Gastrocnemius medialis (tissue), 4 donors: ENCODE measurements at regions of chr20 and their contacts with region 1.

Region 1: GRCh38 chr20:53915446-53916172 is 154.8 kb downstream of the BCAS1 start:
- DNase-seq: peak; percentile 84 to 90
- ATAC-seq: peak; percentile 92 to 94
- H3K4me3 ChIP-seq: peak overlapping the region; percentile 67 to 73 (median 71)
- H3K27ac ChIP-seq: peak overlapping the region; percentile 63 to 88 (median 81)
- H3K4me1 ChIP-seq: peaks cover 4 to 28% of the 10 kb centered on the region in 2 donors
- H3K27me3 ChIP-seq: no peaks in the 10 kb centered on the region
- CTCF ChIP-seq: peak; percentile 80 to 95 (median 87)
- POLR2A ChIP-seq: no peak

Region 2: DNA sequence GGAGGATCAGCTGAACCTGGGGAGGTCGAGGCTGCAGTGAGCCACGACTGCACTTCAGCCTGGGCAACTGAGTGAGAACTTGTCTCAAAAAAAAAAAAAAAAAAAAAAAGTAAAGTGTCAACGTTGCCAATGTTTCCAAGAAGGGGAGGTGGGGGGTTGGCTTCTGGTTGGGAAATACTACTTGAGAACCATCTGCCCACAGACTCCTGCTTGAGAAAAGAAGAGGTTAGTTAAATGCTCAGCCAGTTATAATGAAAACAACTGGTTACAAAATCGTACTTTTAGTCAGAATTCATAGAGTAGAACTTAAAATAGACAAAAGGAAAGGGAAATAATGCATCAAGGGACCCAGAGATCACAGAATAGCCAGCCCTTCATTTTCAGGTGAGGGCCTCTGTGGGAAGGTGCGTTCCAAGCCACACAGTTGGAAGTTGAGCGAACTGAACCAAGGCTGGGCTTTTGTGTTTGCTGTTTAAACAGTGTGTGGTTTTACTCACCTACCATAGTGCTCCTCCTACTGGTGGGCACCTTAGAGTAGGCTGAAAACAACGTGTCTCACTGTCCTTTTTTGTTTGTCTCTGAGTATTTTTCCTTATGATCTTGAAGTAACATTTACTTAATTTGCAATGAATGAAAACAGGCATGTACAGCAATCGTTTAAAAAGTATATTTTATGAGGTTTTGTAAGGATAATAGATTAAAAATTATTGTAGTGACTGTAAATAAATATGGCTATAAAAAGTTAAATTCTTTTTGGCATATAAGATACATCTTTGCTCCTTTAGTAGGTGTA is 45.9 kb before region 1 on chr20:
- in situ Hi-C with region 1: no loop called
- intact Hi-C with region 1: no loop called
- DNase-seq: peak; percentile 33 to 38
- ATAC-seq: peak; percentile 80 to 95
- H3K4me3 ChIP-seq: no peak overlapping the region
- H3K27ac ChIP-seq: peak overlapping the region in 2 of 4 donors; percentile 13 to 45
- H3K4me1 ChIP-seq: peaks cover 5 to 23% of the 10 kb centered on the region in 2 donors
- H3K27me3 ChIP-seq: no peaks in the 10 kb centered on the region
- CTCF ChIP-seq: peak; percentile 42 to 74 (median 62)
- POLR2A ChIP-seq: no peak

Region 3: GRCh38 chr20:53939572-53940359 is 24.2 kb after region 1 on chr20:
- in situ Hi-C with region 1: no loop called
- intact Hi-C with region 1: loop called (anchors 2 kb)
- DNase-seq: peak; percentile 73 to 89
- ATAC-seq: peak; percentile 93
- H3K4me3 ChIP-seq: peak overlapping the region in 3 of 4 donors; percentile 8 to 20 (median 11)
- H3K27ac ChIP-seq: peak overlapping the region; percentile 35 to 73 (median 66)
- H3K4me1 ChIP-seq: peaks cover 23 to 24% of the 10 kb centered on the region in 2 donors
- H3K27me3 ChIP-seq: no peaks in the 10 kb centered on the region
- CTCF ChIP-seq: peak; percentile 48 to 72 (median 70)
- POLR2A ChIP-seq: no peak